ENCODE measurements at regions of chr6 and their contacts with region 1.

Region 1: DNA sequence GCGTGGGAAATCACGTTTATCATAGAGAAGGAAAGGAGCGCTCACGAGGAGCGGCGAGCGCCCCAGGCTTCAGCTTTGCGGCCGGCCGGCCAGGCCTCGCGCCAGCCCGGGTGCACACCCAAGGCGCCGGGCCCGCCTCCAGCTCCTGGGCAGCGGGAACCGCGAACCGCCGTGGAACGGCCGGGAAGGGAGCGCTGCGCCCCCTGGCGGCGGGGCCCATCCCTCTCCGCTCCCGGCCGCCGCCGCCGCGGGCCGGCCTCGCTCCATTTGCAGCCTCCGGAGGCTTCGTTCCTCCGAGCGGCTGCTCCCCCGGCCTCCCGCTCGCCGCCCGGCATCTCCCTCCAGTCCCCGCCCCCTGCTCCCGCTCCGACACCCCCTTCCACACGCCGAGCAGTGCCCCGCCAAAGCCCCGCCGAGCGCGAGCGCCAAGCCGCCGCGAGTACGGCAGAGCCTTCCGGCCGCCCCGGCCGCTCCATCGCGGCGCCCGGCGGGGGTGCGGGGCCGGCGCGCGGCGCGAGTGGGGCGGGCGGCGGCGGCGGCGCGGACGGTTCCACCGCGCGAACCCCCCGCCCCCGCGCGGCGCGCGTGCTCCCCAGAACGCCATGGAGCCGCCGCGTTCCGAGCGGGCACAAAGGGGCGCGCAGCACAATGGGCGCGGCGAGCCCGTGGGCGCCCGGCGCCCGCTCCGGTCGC is 956 bp downstream of the BEND3 start:
- DNase-seq: peak; percentile 33 to 88 (median 60)
- ATAC-seq: peak; percentile 56
- H3K4me3 ChIP-seq: peak overlapping the region; percentile 26
- H3K4me3 Mint-ChIP-seq: peak overlapping the region; percentile 91
- H3K27ac ChIP-seq: no peak overlapping the region
- H3K27ac Mint-ChIP-seq: no peak overlapping the region
- H3K4me1 ChIP-seq: peaks cover 21% of the 10 kb centered on the region
- H3K4me1 Mint-ChIP-seq: peaks cover 18% of the 10 kb centered on the region
- H3K27me3 ChIP-seq: peaks cover 0 to 4% of the 10 kb centered on the region in 2 experiments
- H3K27me3 Mint-ChIP-seq: no peaks in the 10 kb centered on the region
- CTCF ChIP-seq: peak; percentile 69

Region 2: GRCh38 chr6:106339334-106340029 is 774.9 kb before region 1 on chr6:
- CTCF ChIA-PET with region 1: no interaction called
- POLR2A ChIA-PET with region 1: no interaction called
- intact Hi-C with region 1: loop called (anchors 5 kb)
- DNase-seq: peak in 12 of 14 experiments; percentile 4 to 74 (median 32)
- ATAC-seq: peak; percentile 80
- H3K4me3 ChIP-seq: no peak overlapping the region
- H3K4me3 Mint-ChIP-seq: no peak overlapping the region
- H3K27ac ChIP-seq: no peak overlapping the region
- H3K27ac Mint-ChIP-seq: no peak overlapping the region
- H3K4me1 ChIP-seq: peaks cover 3% of the 10 kb centered on the region
- H3K4me1 Mint-ChIP-seq: no peaks in the 10 kb centered on the region
- H3K27me3 ChIP-seq: peaks cover 5 to 8% of the 10 kb centered on the region in 2 experiments
- H3K27me3 Mint-ChIP-seq: peaks cover 52% of the 10 kb centered on the region
- CTCF ChIP-seq: peak; percentile 73

Region 3: DNA sequence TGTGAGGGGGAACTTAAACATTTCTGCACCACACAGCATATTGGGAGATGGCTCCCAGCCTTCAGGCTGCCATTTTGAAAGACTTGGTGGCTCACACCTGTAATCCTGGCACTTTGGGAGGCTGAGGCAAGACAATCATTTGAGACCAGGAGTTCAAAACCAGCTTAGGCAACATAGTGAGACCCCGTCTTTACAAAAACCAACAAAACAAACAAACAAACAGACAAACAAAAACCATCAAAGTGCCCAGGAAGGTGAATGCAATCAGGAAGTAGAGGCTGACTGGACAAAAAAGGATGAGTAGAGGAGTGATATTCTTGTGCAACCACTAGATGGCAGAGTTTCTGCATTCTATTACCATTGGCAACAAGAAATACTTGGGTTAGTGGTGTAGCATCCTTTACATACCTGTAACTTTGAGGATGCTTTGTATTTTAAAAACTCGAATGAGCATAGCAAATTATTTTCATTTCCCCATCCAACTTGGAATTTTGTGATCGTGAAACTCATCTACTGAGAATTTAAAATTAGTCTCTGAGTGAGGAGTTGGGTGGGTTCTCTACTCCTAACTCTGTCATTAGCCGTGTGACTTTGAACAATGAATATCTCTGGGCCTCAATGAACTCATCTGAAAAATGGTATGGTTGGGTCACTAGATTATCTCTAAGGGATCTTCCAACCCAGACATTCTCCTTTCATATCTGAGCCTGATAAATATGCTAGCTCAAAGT is 669.4 kb before region 1 on chr6:
- CTCF ChIA-PET with region 1: no interaction called
- POLR2A ChIA-PET with region 1: no interaction called
- intact Hi-C with region 1: loop called (anchors 1 to 5 kb)
- DNase-seq: peak in 4 of 14 experiments; percentile 49 to 83 (median 81)
- ATAC-seq: peak; percentile 88
- H3K4me3 ChIP-seq: no peak overlapping the region
- H3K4me3 Mint-ChIP-seq: no peak overlapping the region
- H3K27ac ChIP-seq: no peak overlapping the region
- H3K27ac Mint-ChIP-seq: no peak overlapping the region
- H3K4me1 ChIP-seq: peaks cover 9% of the 10 kb centered on the region
- H3K4me1 Mint-ChIP-seq: peaks cover 15% of the 10 kb centered on the region
- H3K27me3 ChIP-seq: peaks cover 4 to 23% of the 10 kb centered on the region in 2 experiments
- H3K27me3 Mint-ChIP-seq: peaks cover 30% of the 10 kb centered on the region
- CTCF ChIP-seq: peak; percentile 78

Region 4: GRCh38 chr6:106512048-106512967 is 602.1 kb before region 1 on chr6:
- CTCF ChIA-PET with region 1: no interaction called
- POLR2A ChIA-PET with region 1: no interaction called
- intact Hi-C with region 1: no loop called
- DNase-seq: peak; percentile 66 to 91 (median 72)
- ATAC-seq: peak; percentile 73
- H3K4me3 ChIP-seq: peak overlapping the region; percentile 99
- H3K4me3 Mint-ChIP-seq: peak overlapping the region; percentile 96
- H3K27ac ChIP-seq: peak overlapping the region; percentile 95 to 96
- H3K27ac Mint-ChIP-seq: peak overlapping the region; percentile 97
- H3K4me1 ChIP-seq: peaks cover 48% of the 10 kb centered on the region
- H3K4me1 Mint-ChIP-seq: peaks cover 55% of the 10 kb centered on the region
- H3K27me3 ChIP-seq: no peaks in the 10 kb centered on the region
- H3K27me3 Mint-ChIP-seq: peaks cover 12% of the 10 kb centered on the region
- CTCF ChIP-seq: peak; percentile 67

Region 5: DNA sequence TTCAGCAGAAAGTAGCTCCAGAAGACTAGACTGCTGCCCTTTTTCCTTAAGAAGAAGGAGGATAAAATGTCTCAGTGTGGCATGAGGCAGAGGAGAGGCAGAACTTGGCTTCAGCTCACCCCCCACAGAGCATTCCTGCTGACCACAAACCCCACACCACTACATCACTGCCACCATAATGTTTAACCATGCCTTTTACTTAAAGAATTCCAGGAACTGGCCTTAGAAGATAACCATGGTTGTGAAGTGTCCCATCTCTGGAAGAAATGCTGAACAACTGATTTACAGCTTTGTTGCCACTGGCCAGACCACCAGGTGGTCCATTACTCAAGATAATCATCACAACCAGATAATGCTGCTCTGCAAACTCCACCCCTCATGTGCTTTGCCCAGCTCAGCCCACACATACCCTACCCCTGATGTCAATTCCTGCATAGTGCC is 293.9 kb before region 1 on chr6:
- CTCF ChIA-PET with region 1: no interaction called
- POLR2A ChIA-PET with region 1: no interaction called
- intact Hi-C with region 1: no loop called
- DNase-seq: no peak
- ATAC-seq: no peak
- H3K4me3 ChIP-seq: no peak overlapping the region
- H3K4me3 Mint-ChIP-seq: no peak overlapping the region
- H3K27ac ChIP-seq: no peak overlapping the region
- H3K27ac Mint-ChIP-seq: no peak overlapping the region
- H3K4me1 ChIP-seq: no peaks in the 10 kb centered on the region
- H3K4me1 Mint-ChIP-seq: no peaks in the 10 kb centered on the region
- H3K27me3 ChIP-seq: peaks cover 0 to 3% of the 10 kb centered on the region in 2 experiments
- H3K27me3 Mint-ChIP-seq: peaks cover 11% of the 10 kb centered on the region
- CTCF ChIP-seq: no peak

Region 6: DNA sequence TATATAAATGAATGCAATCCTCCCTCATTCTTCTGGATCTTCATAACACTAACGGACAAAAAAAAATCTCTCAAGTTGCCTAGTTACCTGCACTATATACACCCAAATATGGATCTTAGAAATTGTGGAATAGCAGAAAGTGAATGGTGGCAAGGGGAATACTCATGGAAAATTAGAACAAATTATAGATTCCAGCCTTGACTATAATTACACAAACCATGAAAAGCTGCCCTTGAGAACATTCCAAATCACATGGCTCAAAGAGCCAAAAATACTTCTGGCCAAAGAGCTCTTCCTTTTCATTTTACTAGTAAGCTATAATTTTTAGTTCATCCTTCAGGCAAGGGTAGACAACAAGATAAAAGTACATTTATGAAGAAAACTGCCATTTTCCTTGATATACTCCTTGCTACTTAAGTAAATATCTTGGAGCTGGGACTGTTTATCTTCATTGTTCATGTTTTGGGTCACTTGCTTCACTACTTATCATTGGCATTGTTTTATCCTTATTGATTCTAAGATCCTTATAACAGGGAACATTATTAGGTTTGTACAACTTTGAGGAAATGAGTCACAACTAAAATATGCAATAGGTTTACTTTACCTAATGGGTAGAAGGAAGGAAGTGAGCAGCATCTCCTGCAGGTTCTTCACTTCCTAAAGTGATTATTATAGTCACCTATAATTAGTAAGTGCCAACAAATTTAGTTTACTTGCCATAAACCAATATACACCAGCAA is 92.7 kb before region 1 on chr6:
- CTCF ChIA-PET with region 1: no interaction called
- POLR2A ChIA-PET with region 1: no interaction called
- intact Hi-C with region 1: loop called in 1 of 2 experiments (anchors 10 kb)
- DNase-seq: no peak
- ATAC-seq: no peak
- H3K4me3 ChIP-seq: no peak overlapping the region
- H3K4me3 Mint-ChIP-seq: no peak overlapping the region
- H3K27ac ChIP-seq: no peak overlapping the region
- H3K27ac Mint-ChIP-seq: no peak overlapping the region
- H3K4me1 ChIP-seq: no peaks in the 10 kb centered on the region
- H3K4me1 Mint-ChIP-seq: no peaks in the 10 kb centered on the region
- H3K27me3 ChIP-seq: no peaks in the 10 kb centered on the region
- H3K27me3 Mint-ChIP-seq: no peaks in the 10 kb centered on the region
- CTCF ChIP-seq: no peak

Region 7: DNA sequence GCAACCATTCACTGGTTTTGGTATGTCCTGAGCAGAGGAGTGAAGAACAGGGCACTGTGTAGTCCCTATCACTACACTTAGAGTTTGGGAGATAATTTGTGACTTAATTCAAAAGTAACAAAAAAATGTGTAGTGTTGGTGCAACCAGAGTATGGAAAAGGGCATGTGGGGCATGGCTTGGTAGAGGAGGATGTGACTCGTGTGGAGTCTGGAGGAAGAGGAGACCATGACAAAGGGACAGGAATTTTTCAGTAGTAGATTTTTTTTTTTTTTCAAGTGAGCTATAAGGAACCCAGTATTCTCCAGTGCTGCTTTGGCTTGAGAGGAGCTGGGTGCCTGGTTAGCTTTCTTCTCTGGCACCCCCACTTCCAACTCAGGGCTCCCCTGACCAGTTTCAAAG is 81.2 kb before region 1 on chr6:
- CTCF ChIA-PET with region 1: interaction called, 9 read pairs
- POLR2A ChIA-PET with region 1: interaction called, 5 read pairs
- intact Hi-C with region 1: loop called (anchors 1 to 10 kb)
- DNase-seq: no peak
- ATAC-seq: no peak
- H3K4me3 ChIP-seq: no peak overlapping the region
- H3K4me3 Mint-ChIP-seq: no peak overlapping the region
- H3K27ac ChIP-seq: no peak overlapping the region
- H3K27ac Mint-ChIP-seq: no peak overlapping the region
- H3K4me1 ChIP-seq: peaks cover 22% of the 10 kb centered on the region
- H3K4me1 Mint-ChIP-seq: peaks cover 45% of the 10 kb centered on the region
- H3K27me3 ChIP-seq: no peaks in the 10 kb centered on the region
- H3K27me3 Mint-ChIP-seq: no peaks in the 10 kb centered on the region
- CTCF ChIP-seq: no peak

Region 8: GRCh38 chr6:107154131-107154800 is 39.9 kb after region 1 on chr6:
- CTCF ChIA-PET with region 1: no interaction called
- POLR2A ChIA-PET with region 1: no interaction called
- intact Hi-C with region 1: no loop called
- DNase-seq: no peak
- ATAC-seq: no peak
- H3K4me3 ChIP-seq: no peak overlapping the region
- H3K4me3 Mint-ChIP-seq: no peak overlapping the region
- H3K27ac ChIP-seq: no peak overlapping the region
- H3K27ac Mint-ChIP-seq: no peak overlapping the region
- H3K4me1 ChIP-seq: no peaks in the 10 kb centered on the region
- H3K4me1 Mint-ChIP-seq: no peaks in the 10 kb centered on the region
- H3K27me3 ChIP-seq: no peaks in the 10 kb centered on the region
- H3K27me3 Mint-ChIP-seq: no peaks in the 10 kb centered on the region
- CTCF ChIP-seq: no peak

Region 9: GRCh38 chr6:107171513-107171912 is 57.2 kb after region 1 on chr6:
- CTCF ChIA-PET with region 1: no interaction called
- POLR2A ChIA-PET with region 1: no interaction called
- intact Hi-C with region 1: no loop called
- DNase-seq: no peak
- ATAC-seq: no peak
- H3K4me3 ChIP-seq: no peak overlapping the region
- H3K4me3 Mint-ChIP-seq: no peak overlapping the region
- H3K27ac ChIP-seq: no peak overlapping the region
- H3K27ac Mint-ChIP-seq: no peak overlapping the region
- H3K4me1 ChIP-seq: no peaks in the 10 kb centered on the region
- H3K4me1 Mint-ChIP-seq: no peaks in the 10 kb centered on the region
- H3K27me3 ChIP-seq: no peaks in the 10 kb centered on the region
- H3K27me3 Mint-ChIP-seq: no peaks in the 10 kb centered on the region
- CTCF ChIP-seq: no peak

Region 10: DNA sequence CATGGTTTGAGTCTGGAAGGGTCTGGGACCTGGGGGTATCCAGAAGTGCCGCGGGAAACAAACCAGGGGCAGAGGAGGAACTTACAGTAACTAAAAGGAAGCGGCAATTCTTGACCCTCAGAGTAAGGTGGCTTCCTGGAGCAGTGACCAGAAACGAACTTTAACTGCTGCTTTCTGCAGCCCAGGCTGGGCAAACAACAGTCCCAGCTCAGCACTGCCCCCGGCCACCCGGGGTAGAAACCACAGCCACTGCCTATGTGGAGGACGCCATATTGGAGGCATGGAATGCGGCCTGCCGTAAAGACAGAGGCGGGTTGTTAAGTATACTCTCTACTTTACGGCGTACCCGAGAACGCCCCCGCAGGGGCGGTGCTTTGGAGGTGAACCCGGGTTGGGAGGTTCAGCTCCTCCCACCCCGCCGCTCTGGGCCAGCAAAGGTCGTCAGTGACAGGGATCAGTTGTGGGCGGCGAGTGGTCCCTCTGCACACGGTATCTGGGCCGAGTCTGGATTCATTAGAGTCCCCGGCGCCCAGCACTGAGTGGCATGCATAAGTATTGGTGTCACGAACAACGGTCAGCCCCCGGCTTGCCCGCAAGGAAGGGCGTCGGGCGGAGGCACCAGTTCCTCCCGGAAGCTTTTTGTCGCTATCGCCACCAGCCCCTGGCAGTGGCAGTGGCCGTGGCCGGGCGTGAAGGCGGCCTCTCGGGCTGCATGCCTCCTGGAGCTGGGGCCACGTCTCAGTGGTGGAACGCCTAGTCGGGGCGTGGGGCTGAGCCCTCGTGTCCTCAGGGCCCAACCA is 345.1 kb after region 1 on chr6 and contains the start of gene PDSS2:
- CTCF ChIA-PET with region 1: interaction called, 3 read pairs
- POLR2A ChIA-PET with region 1: interaction called, 5 read pairs
- intact Hi-C with region 1: loop called in 1 of 2 experiments (anchors 10 kb)
- DNase-seq: peak; percentile 89 to 98 (median 96)
- ATAC-seq: peak; percentile 96
- H3K4me3 ChIP-seq: peak within 1 kb of the TSS; percentile 91
- H3K4me3 Mint-ChIP-seq: peak within 1 kb of the TSS; percentile 94
- H3K27ac ChIP-seq: peak within 1 kb of the TSS; percentile 71 to 79
- H3K27ac Mint-ChIP-seq: peak within 1 kb of the TSS; percentile 97
- H3K4me1 ChIP-seq: peaks cover 16% of the 10 kb centered on the region
- H3K4me1 Mint-ChIP-seq: peaks cover 23% of the 10 kb centered on the region
- H3K27me3 ChIP-seq: no peaks in the 10 kb centered on the region
- H3K27me3 Mint-ChIP-seq: no peaks in the 10 kb centered on the region
- CTCF ChIP-seq: no peak
- total RNA-seq, gene PDSS2: 5.8 to 6.6 TPM

Region 11: DNA sequence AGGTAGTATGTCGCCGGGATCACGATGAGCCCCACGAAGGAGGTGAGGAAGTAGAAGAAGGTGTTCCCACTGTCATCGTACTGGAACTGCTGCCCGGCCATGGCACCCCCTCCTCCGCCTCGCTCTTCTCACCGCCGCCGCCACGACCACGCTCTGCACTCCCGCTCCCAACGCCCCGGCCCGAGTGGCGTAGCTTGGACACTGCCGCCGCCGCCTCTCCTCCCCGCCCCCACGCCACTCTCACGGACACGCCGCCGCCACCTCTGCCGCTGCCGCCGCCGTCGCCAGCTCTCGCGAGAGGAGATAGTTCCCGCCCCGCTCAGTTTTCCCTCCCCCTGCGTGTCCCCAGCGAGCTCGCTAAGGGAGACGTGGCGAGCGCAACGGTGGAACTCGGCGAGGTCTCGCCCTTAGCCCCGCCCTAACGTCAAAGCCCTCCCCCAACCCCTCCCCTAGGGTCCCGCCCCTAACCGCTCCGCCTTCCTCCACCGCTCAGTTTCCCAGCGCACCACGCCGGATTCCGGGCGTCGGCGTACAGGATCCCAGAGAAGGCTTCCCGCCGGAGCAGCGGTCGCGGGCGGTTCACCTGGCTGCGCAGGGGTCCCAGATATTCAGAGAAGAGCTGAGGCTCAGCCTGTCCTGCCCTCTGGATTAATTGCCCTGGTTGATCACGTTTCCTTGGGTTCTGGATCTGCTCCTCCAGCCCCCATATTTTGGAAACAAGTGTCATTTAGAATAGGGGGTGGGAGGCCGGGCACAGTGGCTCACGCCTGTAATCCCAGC is 843.7 kb after region 1 on chr6 and contains the start of gene SEC63:
- CTCF ChIA-PET with region 1: no interaction called
- POLR2A ChIA-PET with region 1: no interaction called
- intact Hi-C with region 1: loop called in 1 of 2 experiments (anchors 10 kb)
- DNase-seq: peak; percentile 94 to 98 (median 97)
- ATAC-seq: peak; percentile 97
- H3K4me3 ChIP-seq: peak within 1 kb of the TSS; percentile 81
- H3K4me3 Mint-ChIP-seq: peak within 1 kb of the TSS; percentile 99
- H3K27ac ChIP-seq: peak within 1 kb of the TSS; percentile 46 to 61
- H3K27ac Mint-ChIP-seq: peak within 1 kb of the TSS; percentile 82
- H3K4me1 ChIP-seq: peaks cover 16% of the 10 kb centered on the region
- H3K4me1 Mint-ChIP-seq: peaks cover 32% of the 10 kb centered on the region
- H3K27me3 ChIP-seq: no peaks in the 10 kb centered on the region
- H3K27me3 Mint-ChIP-seq: no peaks in the 10 kb centered on the region
- CTCF ChIP-seq: no peak
- total RNA-seq, gene SEC63: 80.3 to 86.7 TPM